ENCODE measurements at regions of chr7 and their contacts with region 1.

Region 1: GRCh38 chr7:120987683-120988590 is 574 bp upstream of the CPED1 start:
- DNase-seq: peak; percentile 93
- H3K4me3 ChIP-seq: peak overlapping the region; percentile 61
- H3K27ac ChIP-seq: peak overlapping the region; percentile 48
- H3K27me3 ChIP-seq: no peaks in the 10 kb centered on the region
- CTCF ChIP-seq: peak; percentile 98

Region 2: DNA sequence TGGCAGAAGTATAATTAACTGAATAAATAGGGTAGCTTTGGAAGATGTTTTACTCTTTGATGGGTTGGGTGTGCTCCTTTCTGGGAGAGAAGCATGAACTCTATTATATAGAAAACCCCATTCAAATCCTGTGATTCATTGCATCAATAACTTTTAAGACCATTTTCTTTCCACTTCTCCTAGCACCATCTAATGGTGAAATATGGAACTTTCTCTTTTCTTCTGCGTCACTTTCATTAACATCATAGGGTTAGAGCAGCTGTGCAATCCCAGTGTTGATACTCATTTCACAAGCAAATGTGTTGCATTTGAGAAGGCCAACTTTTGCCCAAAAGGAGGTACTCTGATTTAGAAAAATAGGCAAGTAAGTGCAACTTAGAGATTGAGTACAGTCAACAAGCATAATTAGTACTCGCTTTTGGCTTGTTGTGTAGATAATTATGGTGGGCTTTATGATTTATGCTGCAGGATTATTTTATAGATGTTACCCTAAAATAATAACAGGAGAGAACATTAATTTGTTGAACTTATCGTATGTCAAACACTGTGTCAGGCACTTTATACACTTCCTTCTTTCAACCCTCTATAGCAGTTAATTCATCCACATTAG is 93.5 kb after region 1 on chr7:
- in situ Hi-C with region 1: loop called (anchors 25 kb)
- DNase-seq: peak; percentile 22
- H3K4me3 ChIP-seq: no peak overlapping the region
- H3K27ac ChIP-seq: no peak overlapping the region
- H3K27me3 ChIP-seq: no peaks in the 10 kb centered on the region
- CTCF ChIP-seq: peak; percentile 46

Region 3: GRCh38 chr7:121313793-121314676 is 326.1 kb after region 1 on chr7:
- in situ Hi-C with region 1: no loop called
- DNase-seq: no peak
- H3K4me3 ChIP-seq: no peak overlapping the region
- H3K27ac ChIP-seq: no peak overlapping the region
- H3K27me3 ChIP-seq: no peaks in the 10 kb centered on the region
- CTCF ChIP-seq: no peak